ENCODE measurements at regions of chr12 and their contacts with region 1.

Region 1: GRCh38 chr12:6423267-6424007 is 21.3 kb upstream of the CD27 start:
- DNase-seq: peak; percentile 90
- ATAC-seq: peak; percentile 99
- H3K4me3 ChIP-seq: no peak overlapping the region
- H3K27ac ChIP-seq: no peak overlapping the region
- H3K4me1 ChIP-seq: no peaks in the 10 kb centered on the region
- H3K27me3 ChIP-seq: no peaks in the 10 kb centered on the region
- CTCF ChIP-seq: peak; percentile 96
- POLR2A ChIP-seq: peak; percentile 54; the same call in 1 of the 2 replicates
- RAD21 ChIP-seq: peak; percentile 97

Region 2: GRCh38 chr12:6323340-6323994 is 100.0 kb before region 1 on chr12:
- CTCF ChIA-PET with region 1: no interaction called
- POLR2A ChIA-PET with region 1: no interaction called
- dilution Hi-C with region 1: no loop called
- in situ Hi-C with region 1: no loop called
- intact Hi-C with region 1: loop called (anchors 1 kb)
- DNase-seq: peak; percentile 94
- ATAC-seq: peak; percentile 64
- H3K4me3 ChIP-seq: no peak overlapping the region
- H3K27ac ChIP-seq: peak overlapping the region; percentile 48
- H3K4me1 ChIP-seq: peaks cover 25% of the 10 kb centered on the region
- H3K27me3 ChIP-seq: no peaks in the 10 kb centered on the region
- CTCF ChIP-seq: peak; percentile 84
- POLR2A ChIP-seq: no peak; the same call in 1 of the 2 replicates
- RAD21 ChIP-seq: peak; percentile 58

Region 3: GRCh38 chr12:6341417-6342139 is 81.9 kb before region 1 on chr12 and contains the start of gene TNFRSF1A:
- CTCF ChIA-PET with region 1: no interaction called
- POLR2A ChIA-PET with region 1: interaction called, 3 read pairs
- dilution Hi-C with region 1: no loop called
- in situ Hi-C with region 1: no loop called
- intact Hi-C with region 1: loop called (anchors 2 kb)
- DNase-seq: peak; percentile 85
- ATAC-seq: peak; percentile 61
- H3K4me3 ChIP-seq: peak within 1 kb of the TSS; percentile 86
- H3K27ac ChIP-seq: peak within 1 kb of the TSS; percentile 98
- H3K4me1 ChIP-seq: peaks cover 46% of the 10 kb centered on the region
- H3K27me3 ChIP-seq: no peaks in the 10 kb centered on the region
- CTCF ChIP-seq: no peak
- POLR2A ChIP-seq: no peak; the same call in 1 of the 2 replicates
- RAD21 ChIP-seq: peak; percentile 17; the same call in 1 of the 2 replicates
- total RNA-seq, gene TNFRSF1A: 79.6 and 86.7 TPM in 2 replicates

Region 4: DNA sequence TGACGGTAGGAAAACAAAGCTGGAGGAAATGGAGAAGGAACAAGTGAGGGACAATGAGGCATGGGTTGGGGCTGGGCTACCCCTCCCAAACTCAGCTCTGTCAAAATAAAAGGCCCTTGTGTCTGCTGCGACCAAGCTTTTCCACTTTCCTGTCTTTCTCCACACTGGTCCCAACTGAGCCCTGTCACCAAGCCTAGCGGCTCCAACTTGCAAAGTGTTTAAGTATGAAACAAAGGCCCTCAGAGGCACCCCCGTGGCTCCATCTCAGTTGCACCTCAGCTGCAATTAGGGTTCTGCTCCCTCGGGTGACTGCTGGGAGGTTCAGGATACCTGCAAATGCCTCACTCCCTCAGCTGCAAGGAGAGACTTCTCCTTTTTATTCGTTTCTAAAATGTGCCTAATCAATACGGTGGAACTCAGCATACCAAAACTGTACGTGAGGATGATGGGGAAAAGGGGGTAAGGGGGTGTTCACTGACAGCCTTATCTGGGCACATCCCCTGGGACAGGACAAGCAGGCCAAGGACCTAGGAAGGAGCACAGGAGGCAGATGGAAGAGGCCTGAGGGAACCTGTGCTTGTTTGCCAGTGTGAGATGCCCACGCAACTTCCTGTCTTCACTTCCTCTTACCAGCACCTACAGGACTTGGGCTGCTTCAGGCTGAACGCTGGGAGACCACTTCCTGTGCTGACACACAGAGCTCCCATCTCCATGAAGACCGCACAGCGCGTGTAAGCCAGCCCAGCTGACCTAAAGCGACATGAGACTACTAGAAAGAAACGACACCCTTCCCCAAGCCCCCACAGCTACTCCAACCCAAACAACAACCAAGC is 38.2 kb after region 1 on chr12:
- CTCF ChIA-PET with region 1: interaction called, 8 read pairs
- POLR2A ChIA-PET with region 1: no interaction called
- dilution Hi-C with region 1: no loop called
- in situ Hi-C with region 1: loop called (anchors 5 kb)
- intact Hi-C with region 1: loop called (anchors 1 kb)
- DNase-seq: peak; percentile 45
- ATAC-seq: no peak
- H3K4me3 ChIP-seq: no peak overlapping the region
- H3K27ac ChIP-seq: no peak overlapping the region
- H3K4me1 ChIP-seq: no peaks in the 10 kb centered on the region
- H3K27me3 ChIP-seq: no peaks in the 10 kb centered on the region
- CTCF ChIP-seq: no peak
- POLR2A ChIP-seq: no peak
- RAD21 ChIP-seq: no peak

Region 5: DNA sequence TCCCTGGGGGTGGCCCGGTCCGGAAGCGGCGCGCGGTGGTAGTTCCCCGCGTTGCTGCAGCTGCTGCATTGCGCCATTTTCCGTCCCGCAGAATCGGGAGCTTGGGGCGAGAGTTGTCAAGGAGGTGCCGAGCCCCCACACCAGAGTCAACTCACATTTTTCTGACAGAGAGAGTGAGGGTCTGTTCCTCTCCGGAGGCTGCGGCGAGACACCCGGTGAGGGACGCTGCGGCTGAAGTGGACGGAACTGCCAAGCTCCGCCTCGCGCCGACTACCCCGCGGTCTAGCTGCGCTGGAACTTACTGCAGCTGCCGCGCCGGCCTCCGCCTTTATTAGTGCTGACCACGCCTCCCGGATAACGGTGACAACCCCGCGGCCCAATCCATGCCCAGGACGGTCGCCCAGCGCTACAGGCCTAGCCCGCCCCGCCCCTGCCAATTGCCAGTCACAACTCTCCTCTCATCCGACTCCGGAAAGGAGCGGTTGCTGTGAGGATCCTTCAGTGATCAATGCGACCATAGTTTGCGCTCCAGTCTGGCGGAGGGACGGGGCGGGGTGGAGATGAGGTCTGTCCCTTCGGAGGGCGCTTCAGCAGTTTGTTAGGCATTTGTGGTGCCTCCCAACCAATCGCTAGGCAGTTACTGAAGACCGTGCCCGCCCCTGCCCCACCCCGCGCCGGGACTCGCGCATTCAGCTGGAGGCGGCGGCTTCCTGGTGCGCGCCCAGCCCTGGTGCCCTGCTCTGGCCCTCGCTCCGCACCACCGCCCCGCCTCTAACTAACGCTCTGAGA is 47.1 kb after region 1 on chr12 and contains the start of gene VAMP1:
- CTCF ChIA-PET with region 1: interaction called, 8 read pairs
- POLR2A ChIA-PET with region 1: no interaction called
- dilution Hi-C with region 1: no loop called
- in situ Hi-C with region 1: no loop called
- intact Hi-C with region 1: loop called (anchors 1 kb)
- DNase-seq: peak; percentile 96
- ATAC-seq: peak; percentile 96
- H3K4me3 ChIP-seq: peak within 1 kb of the TSS; percentile 78
- H3K27ac ChIP-seq: peak within 1 kb of the TSS; percentile 89
- H3K4me1 ChIP-seq: peaks cover 4% of the 10 kb centered on the region
- H3K27me3 ChIP-seq: no peaks in the 10 kb centered on the region
- CTCF ChIP-seq: no peak
- POLR2A ChIP-seq: peak; percentile 99
- RAD21 ChIP-seq: no peak
- total RNA-seq, gene VAMP1: 7.2 and 7.5 TPM in 2 replicates

Region 6: GRCh38 chr12:6540181-6540877 is 116.9 kb after region 1 on chr12:
- CTCF ChIA-PET with region 1: no interaction called
- POLR2A ChIA-PET with region 1: no interaction called
- dilution Hi-C with region 1: no loop called
- in situ Hi-C with region 1: loop called (anchors 5 kb)
- intact Hi-C with region 1: loop called (anchors 1 kb)
- DNase-seq: peak; percentile 93
- ATAC-seq: peak; percentile 70
- H3K4me3 ChIP-seq: no peak overlapping the region
- H3K27ac ChIP-seq: peak overlapping the region; percentile 65
- H3K4me1 ChIP-seq: peaks cover 11% of the 10 kb centered on the region; the same call in 1 of the 2 replicates
- H3K27me3 ChIP-seq: no peaks in the 10 kb centered on the region
- CTCF ChIP-seq: no peak; the same call in 1 of the 2 replicates
- POLR2A ChIP-seq: no peak
- RAD21 ChIP-seq: no peak

Region 7: DNA sequence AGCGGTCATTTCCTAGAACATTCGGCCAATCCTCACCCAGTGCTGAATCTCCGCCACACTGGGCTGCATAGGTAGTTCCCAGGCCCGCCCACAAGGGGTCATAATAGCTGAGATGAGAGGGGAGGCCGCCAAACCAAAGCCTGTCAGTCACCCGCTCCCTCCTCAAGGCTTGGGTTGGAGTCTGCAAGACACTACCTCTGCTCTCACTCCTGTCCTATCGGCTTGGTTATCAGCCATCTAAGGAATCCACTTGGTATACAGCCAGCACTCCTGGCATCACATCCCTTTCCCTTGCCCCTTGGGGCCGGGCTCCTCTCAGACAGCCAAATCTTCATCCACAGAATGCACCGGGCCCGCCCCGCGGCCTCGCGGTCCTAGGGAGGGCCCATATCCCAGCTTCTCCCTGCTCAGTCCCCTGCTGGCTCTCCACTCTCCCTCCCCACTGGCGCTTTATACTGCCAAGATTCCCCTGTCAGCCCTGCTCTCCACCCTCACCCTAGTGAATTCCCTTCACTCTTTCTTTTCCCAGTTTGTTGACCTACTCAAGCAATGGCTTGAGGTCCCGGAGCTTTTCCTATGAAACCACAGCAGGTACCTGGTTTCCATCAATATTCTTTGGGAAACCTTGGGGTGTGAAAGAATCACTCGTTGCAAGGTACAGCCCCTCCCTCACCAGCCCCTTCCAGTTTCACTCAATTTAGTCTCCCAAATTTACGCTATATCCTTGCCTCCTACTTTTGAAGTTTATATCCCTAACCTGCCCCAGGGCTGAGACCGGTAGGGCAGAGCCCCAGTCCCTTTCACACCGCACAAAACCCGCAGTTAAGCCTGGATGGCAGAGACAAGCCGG is 131.0 kb after region 1 on chr12:
- CTCF ChIA-PET with region 1: no interaction called
- POLR2A ChIA-PET with region 1: no interaction called
- dilution Hi-C with region 1: no loop called
- in situ Hi-C with region 1: no loop called
- intact Hi-C with region 1: loop called (anchors 1 kb)
- DNase-seq: peak; percentile 72
- ATAC-seq: peak; percentile 40
- H3K4me3 ChIP-seq: peak overlapping the region; percentile 82
- H3K27ac ChIP-seq: peak overlapping the region; percentile 46
- H3K4me1 ChIP-seq: peaks cover 40% of the 10 kb centered on the region
- H3K27me3 ChIP-seq: no peaks in the 10 kb centered on the region
- CTCF ChIP-seq: peak; percentile 60
- POLR2A ChIP-seq: no peak
- RAD21 ChIP-seq: peak; percentile 43